Common myeloid progenitor, CD34-positive (primary cell): ENCODE measurements at regions of chr7 and their contacts with region 1.

Region 1: DNA sequence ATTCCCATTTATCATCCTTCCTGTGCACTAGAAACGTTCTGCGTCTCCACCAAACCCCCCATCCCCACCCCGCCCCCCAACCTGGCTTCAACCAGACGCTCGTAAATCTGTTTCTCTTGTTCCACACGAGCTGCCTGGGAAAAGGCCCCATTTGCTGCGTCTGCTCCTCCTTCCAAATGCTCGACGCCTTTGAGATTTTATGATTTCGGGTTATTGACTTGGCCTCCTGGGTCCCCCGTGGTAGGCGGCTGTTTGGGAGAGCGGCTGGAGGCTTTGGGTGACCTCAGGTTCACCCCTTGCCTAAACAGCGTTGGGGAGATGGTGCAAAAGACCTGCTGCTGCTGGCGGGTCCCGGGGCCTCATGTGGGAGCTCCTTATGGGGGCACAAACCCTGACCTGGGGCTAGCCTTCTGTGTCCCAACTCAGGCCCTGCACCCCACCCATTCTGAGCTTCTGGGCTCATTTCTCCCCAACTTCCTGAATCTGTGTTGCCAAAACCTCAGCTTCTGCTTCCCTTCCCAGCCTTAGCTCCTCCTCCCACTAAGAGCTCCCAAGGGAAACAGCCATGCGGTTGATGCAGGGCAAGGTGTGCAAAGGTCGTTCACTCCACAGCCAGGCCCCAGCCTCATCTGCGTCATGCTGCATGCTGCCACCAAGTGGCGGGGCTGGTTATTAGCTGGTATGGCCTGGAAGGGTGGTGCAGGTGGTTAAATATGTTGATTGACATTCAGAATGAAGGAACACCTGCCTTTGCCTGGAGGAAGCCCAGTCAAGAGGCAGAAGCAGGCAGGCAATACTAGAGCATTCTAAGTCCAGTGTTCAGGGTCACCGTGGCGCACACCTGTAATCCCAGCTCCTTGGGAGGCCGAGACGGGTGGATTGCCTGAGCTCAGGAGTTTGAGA is 49.1 kb upstream of the ELN start:
- DNase-seq: peak; percentile 59 to 78 (median 74)
- H3K4me3 ChIP-seq: peak overlapping the region in 1 of 7 experiments; percentile 22
- H3K27ac ChIP-seq: no peak overlapping the region
- H3K4me1 ChIP-seq: peaks cover 0 to 24% (median 20%) of the 10 kb centered on the region in 4 experiments
- H3K27me3 ChIP-seq: no peaks in the 10 kb centered on the region

Region 2: DNA sequence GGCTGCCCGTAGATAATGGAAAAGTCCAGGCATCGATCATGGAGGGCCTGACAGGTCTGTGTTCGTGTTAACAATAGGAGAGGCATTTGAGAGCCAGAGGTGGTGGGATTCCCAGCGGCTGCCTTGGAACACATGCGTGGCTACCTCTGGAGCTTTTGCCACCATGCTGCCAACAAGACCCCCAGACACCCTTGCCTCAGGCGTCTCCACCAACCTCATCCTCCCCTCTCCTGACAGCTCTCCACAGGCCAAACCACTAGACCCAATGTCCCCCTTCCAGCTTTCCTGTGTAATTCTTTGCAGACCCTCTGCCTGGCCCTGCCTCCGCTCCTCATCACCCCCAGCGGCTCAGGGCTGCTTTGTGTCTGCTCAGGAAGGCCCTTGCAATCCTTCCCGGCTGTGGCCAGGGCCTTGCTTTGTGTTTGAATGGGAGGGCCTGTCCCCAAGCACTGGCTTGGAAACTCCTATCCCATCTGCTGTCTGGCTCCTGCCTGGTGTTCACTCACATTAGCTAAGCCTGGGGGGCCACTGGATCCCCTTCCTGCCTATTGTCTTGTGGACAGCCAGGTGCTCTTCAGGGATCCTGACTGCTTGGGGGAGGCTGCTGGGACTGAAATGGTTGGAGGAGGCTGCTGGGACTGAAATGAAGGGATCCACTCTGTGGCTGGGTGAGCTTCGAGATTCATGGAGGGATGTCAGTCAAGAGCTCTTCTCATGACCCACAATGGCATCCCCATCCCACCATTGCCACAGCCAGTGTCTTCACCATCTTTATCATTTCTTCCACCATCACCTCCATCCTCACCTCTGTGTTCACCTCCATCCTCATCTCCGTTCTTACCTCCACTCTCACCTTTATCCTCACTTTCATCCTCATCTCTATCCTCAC is 11.7 kb before region 1 on chr7:
- CTCF ChIA-PET with region 1: interaction called, 12 read pairs
- POLR2A ChIA-PET with region 1: no interaction called
- DNase-seq: peak in 1 of 3 donors; percentile 29
- H3K4me3 ChIP-seq: no peak overlapping the region
- H3K27ac ChIP-seq: no peak overlapping the region
- H3K4me1 ChIP-seq: peaks cover 0 to 7% (median 0%) of the 10 kb centered on the region in 4 experiments
- H3K27me3 ChIP-seq: no peaks in the 10 kb centered on the region